Sciatic nerve (tissue), 2 donors: ENCODE measurements at regions of chr10 and their contacts with region 1.

Region 1: DNA sequence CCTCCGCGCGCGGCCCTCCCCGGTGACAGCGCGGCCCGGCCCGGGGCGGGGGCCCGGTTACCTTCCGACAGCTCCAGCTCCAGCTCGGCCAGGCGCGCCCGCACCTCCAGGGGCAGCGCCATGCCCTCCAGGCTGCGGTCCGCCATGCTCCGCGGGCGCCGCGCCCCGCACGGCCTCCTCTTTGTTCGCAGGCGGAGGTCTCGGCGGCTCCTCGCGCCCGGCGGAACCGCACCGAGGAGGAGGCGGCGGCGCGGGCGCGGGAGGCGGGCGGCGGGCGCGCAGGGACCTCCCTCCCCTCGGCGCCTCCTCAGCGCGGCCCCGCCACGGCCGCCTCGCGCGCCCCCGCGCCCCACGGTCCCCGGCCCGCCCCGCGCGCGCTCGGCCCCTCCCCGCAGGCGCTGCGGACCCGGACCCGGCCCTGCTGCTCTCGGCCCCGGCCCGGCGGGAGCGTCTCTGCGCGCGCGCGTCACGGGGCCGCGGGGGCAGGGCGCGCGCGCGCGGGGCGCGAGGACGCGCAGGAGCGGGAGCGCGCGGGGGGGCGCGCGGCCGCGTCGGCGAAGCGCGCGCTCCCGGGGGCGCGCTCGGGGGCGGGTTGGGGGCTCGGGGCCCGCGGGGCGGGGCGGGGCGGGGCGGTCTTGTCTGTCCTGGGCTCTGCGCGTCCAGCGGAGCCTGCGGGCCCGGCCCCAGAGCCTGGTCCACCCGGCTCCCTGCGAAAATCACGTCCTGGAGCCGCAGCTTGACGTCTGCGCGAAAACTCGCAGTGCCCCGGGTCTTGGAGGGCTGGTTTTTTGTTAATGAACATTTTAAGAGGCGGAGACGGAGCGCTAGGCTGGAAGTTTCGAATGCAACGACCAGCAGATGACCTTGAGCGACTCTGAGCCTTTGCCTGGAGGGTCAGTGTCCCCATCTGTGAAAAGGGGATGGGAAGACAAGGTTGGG is at the start of gene DIP2C:
- DNase-seq: peak; percentile 86
- ATAC-seq: peak; percentile 85
- total RNA-seq, gene DIP2C: 38.7 TPM

Region 2: DNA sequence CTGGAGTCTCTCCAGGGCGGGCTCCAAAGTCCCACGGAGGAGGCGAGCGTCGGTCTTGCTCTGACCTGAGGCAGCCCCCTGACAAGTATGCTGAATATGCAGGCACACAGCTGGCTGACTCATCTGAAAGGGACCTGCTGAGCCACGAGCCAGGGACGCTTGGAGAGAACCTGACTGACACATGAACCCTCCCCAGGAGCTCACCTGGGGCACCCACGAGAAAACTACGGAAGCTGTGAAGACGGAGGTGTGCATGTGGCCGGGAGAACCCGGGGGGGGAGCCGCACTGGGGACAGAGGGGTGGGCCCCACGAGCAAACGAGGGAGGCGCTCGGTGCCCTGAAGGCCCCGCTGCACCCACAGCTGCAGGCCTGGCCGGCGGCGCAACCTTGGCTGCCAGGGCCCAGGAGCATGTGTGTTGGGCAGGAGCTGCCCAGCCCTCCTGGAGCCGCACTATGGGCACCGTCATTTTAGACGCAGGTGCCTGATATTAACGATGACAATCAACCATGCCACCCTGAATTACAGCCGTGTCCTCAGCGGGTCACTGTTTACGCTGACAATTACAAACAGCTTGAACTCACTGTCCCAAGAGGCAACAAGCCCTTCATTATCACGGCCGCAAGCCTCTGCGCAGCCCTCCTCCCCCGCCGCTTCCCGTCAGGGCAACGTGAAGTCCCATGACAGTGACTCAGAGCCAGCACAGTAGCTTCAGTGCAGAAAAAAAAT is 64.9 kb before region 1 on chr10:
- intact Hi-C with region 1: loop called (anchors 1 kb)
- DNase-seq: peak; percentile 86
- ATAC-seq: peak; percentile 85